ENCODE measurements at regions of chr22 and their contacts with region 1.

Region 1: DNA sequence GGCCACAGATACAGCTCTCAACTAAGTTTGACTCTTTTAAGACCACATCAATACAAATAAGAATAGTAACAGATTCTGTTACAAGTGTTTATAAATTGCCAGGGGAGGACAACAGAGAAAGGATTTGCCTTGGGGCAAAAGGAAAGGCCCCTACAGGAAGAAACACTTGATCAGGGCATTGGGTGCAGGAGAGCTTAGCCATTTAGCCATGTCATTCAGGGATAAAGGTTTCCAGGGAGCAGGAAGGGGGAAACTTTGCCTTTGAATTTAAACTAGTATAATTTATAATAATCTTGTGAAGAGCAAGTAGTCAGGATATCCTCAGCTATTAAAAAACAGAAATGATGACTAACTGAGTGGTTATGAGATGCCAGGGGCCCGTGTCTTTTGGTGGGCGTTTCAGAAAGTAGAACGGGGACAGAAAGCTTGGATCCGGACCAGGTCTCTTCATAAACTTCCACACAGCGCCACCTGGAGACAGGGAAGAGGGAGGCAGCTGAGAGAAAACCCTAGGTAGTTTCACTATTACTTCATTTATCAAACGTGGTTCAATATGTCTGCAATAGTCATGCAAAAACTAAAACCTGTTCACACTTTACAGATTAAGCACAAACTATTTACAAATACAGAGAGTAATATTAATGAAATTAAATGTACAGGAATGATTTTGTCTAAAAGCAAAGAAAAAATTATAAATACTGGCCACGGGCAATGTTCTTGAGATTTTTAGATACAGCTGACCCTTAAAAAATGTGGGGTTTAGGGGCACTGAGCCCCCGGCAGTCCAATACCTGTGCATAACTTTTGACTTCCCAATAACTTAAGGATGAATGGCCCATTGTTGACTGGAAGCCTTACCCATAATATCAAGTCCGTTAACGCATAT is 11.0 kb upstream of the SLC5A4 start:
- DNase-seq: peak; percentile 80
- H3K4me3 ChIP-seq: no peak overlapping the region
- H3K27ac ChIP-seq: no peak overlapping the region
- H3K4me1 ChIP-seq: no peaks in the 10 kb centered on the region
- H3K27me3 ChIP-seq: no peaks in the 10 kb centered on the region
- CTCF ChIP-seq: peak; percentile 92
- EP300 ChIP-seq: no peak
- RAD21 ChIP-seq: peak; percentile 79

Region 2: GRCh38 chr22:32103658-32104315 is 162.3 kb before region 1 on chr22:
- CTCF ChIA-PET with region 1: interaction called, 17 read pairs
- POLR2A ChIA-PET with region 1: no interaction called
- DNase-seq: peak; percentile 42
- H3K4me3 ChIP-seq: no peak overlapping the region
- H3K27ac ChIP-seq: no peak overlapping the region
- H3K4me1 ChIP-seq: no peaks in the 10 kb centered on the region
- H3K27me3 ChIP-seq: 0 out of 2 replicates have a peak, but pooled peaks cover 5% of the 10 kb centered on the region
- CTCF ChIP-seq: peak; percentile 55
- EP300 ChIP-seq: no peak
- RAD21 ChIP-seq: peak; percentile 74

Region 3: DNA sequence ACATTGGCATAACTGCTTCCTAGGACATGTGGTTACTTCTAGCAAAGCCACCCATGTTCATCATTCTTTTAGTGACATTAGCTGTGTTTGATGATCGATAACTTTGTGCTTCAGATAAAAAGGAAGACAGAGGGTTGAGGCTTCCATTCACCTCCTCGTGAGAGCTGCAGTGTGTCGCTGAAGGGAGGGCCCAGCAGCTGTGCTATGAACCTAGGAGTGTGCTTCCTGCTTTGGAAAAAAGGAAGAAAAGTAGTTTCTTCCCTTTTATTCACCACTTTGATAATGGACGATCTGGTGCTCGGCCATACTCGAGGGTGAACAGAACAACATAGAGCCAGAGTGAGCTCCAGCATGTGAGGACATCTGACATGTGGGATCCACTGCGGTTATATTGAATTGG is 55.1 kb before region 1 on chr22:
- CTCF ChIA-PET with region 1: interaction called, 18 read pairs
- POLR2A ChIA-PET with region 1: no interaction called
- DNase-seq: no peak
- H3K4me3 ChIP-seq: no peak overlapping the region
- H3K27ac ChIP-seq: no peak overlapping the region
- H3K4me1 ChIP-seq: peaks cover 0 to 6% of the 10 kb centered on the region in 2 experiments; a peak in 1 of 4 replicates
- H3K27me3 ChIP-seq: no peaks in the 10 kb centered on the region
- CTCF ChIP-seq: no peak
- EP300 ChIP-seq: no peak
- RAD21 ChIP-seq: no peak

Region 4: GRCh38 chr22:32255726-32256125 is 10.4 kb before region 1 on chr22:
- CTCF ChIA-PET with region 1: interaction called, 16 read pairs
- POLR2A ChIA-PET with region 1: no interaction called
- DNase-seq: no peak
- H3K4me3 ChIP-seq: no peak overlapping the region
- H3K27ac ChIP-seq: no peak overlapping the region
- H3K4me1 ChIP-seq: no peaks in the 10 kb centered on the region
- H3K27me3 ChIP-seq: no peaks in the 10 kb centered on the region
- CTCF ChIP-seq: no peak
- EP300 ChIP-seq: no peak
- RAD21 ChIP-seq: no peak

Region 5: GRCh38 chr22:32343941-32344340 is 77.8 kb after region 1 on chr22:
- CTCF ChIA-PET with region 1: interaction called, 10 read pairs
- POLR2A ChIA-PET with region 1: no interaction called
- DNase-seq: no peak
- H3K4me3 ChIP-seq: no peak overlapping the region
- H3K27ac ChIP-seq: no peak overlapping the region
- H3K4me1 ChIP-seq: no peaks in the 10 kb centered on the region
- H3K27me3 ChIP-seq: no peaks in the 10 kb centered on the region
- CTCF ChIP-seq: no peak
- EP300 ChIP-seq: no peak
- RAD21 ChIP-seq: no peak